K562 (cell line): ENCODE measurements at regions of chr1 and their contacts with region 1.

Region 1: GRCh38 chr1:206734499-206735142 is 36.0 kb upstream of the IL19 start:
- DNase-seq: peak; percentile 72 to 79 (median 76)
- ATAC-seq: peak; percentile 84
- H3K4me3 ChIP-seq: no peak overlapping the region
- H3K27ac ChIP-seq: no peak overlapping the region
- H3K4me1 ChIP-seq: peaks cover 10 to 17% of the 10 kb centered on the region in 2 experiments
- H3K27me3 ChIP-seq: no peaks in the 10 kb centered on the region; a peak in 1 of 5 replicates
- CTCF ChIP-seq: peak; percentile 89 to 96 (median 89)
- EP300 ChIP-seq: no peak
- POLR2A ChIP-seq: no peak
- RAD21 ChIP-seq: peak; percentile 88 to 89

Region 2: GRCh38 chr1:206489980-206490770 is 244.4 kb before region 1 on chr1:
- CTCF ChIA-PET with region 1: no interaction called
- POLR2A ChIA-PET with region 1: no interaction called
- in situ Hi-C with region 1: no loop called
- intact Hi-C with region 1: loop called (anchors 10 kb)
- DNase-seq: peak; percentile 90 to 94 (median 92)
- ATAC-seq: peak; percentile 96
- H3K4me3 ChIP-seq: no peak overlapping the region
- H3K27ac ChIP-seq: no peak overlapping the region
- H3K4me1 ChIP-seq: peaks cover 19 to 31% of the 10 kb centered on the region in 2 experiments
- H3K27me3 ChIP-seq: no peaks in the 10 kb centered on the region
- CTCF ChIP-seq: peak; percentile 99
- EP300 ChIP-seq: no peak
- POLR2A ChIP-seq: no peak
- RAD21 ChIP-seq: peak; percentile 98 to 99

Region 3: DNA sequence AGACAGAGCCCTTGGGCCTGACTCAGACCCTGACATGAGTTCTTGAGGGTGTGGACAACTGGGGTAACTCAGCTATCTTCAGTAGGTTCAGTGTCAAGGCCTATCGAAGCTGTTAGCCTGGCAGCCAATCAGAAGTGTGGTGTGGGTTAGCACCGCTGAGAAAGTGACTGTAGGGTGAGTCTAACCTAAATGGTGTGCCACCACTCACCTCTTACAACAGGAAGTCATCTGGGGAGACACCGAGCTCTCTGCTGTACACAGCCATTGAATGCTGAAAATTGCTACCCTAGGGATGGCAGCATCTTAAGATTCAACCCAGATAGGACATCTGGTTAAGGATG is 182.7 kb before region 1 on chr1:
- CTCF ChIA-PET with region 1: no interaction called
- POLR2A ChIA-PET with region 1: no interaction called
- in situ Hi-C with region 1: no loop called
- intact Hi-C with region 1: no loop called
- DNase-seq: peak in 1 of 4 experiments; percentile 40
- ATAC-seq: no peak
- H3K4me3 ChIP-seq: no peak overlapping the region
- H3K27ac ChIP-seq: no peak overlapping the region
- H3K4me1 ChIP-seq: peaks cover 27 to 61% of the 10 kb centered on the region in 2 experiments
- H3K27me3 ChIP-seq: no peaks in the 10 kb centered on the region
- CTCF ChIP-seq: no peak
- EP300 ChIP-seq: no peak
- POLR2A ChIP-seq: no peak
- RAD21 ChIP-seq: no peak

Region 4: DNA sequence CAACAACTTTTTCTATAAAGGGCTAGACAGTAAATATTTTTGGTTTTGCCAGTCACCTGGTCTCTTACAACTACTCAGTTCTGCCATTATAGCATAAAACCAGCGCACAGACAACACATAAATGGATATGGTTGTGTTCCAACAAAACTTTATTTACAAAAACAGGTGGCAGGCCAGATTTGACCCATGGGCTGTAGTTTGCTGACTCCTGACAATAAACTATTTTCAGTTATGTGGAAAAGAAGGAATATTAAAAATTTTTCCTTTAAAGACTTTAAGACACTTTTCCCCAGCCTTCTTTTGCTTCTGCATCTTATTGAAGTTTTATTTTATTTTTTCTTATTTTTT is 138.3 kb before region 1 on chr1:
- CTCF ChIA-PET with region 1: no interaction called
- POLR2A ChIA-PET with region 1: no interaction called
- in situ Hi-C with region 1: no loop called
- intact Hi-C with region 1: no loop called
- DNase-seq: no peak
- ATAC-seq: no peak
- H3K4me3 ChIP-seq: no peak overlapping the region
- H3K27ac ChIP-seq: no peak overlapping the region
- H3K4me1 ChIP-seq: peaks cover 0 to under 1% of the 10 kb centered on the region in 2 experiments; a peak in 2 of 5 replicates
- H3K27me3 ChIP-seq: no peaks in the 10 kb centered on the region
- CTCF ChIP-seq: no peak
- EP300 ChIP-seq: no peak
- POLR2A ChIP-seq: no peak
- RAD21 ChIP-seq: no peak

Region 5: DNA sequence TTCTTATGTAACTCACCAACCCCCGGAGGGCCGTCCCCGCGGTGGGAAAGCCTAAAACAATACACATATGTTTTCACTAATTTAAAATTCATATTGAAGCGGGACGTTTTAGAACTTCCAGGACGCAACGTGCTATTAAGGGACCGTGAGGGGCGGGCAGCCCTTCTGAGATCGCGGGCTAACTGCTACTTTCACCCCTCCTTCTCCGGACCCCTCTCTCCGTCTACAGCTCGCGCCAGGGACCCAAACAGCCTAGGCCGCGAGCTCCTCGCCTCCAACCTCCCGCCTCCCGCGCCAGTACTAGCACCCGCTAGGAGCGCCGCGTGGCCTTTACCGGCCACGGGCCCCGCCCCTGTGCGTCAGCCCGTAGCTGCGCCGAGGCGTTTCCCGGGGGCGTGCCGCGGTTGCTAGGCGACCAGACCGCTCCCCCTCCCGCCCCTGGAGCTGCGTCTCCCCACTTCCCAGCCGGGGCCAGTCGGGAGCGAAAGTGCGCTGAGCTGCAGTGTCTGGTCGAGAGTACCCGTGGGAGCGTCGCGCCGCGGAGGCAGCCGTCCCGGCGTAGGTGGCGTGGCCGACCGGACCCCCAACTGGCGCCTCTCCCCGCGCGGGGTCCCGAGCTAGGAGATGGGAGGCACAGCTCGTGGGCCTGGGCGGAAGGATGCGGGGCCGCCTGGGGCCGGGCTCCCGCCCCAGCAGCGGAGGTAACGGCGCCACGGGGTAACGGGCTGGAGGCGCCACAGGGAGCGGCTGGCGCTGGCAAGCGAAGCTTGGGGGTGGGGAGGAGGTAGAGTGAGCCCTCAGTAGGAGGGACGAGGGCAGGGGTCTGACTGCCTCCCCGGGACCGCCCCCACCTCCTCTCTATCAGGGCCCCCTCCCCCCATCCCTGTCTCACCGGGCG is 99.3 kb before region 1 on chr1 and contains the start of gene DYRK3:
- CTCF ChIA-PET with region 1: interaction called, 3 read pairs
- POLR2A ChIA-PET with region 1: interaction called, 3 read pairs
- in situ Hi-C with region 1: no loop called
- intact Hi-C with region 1: loop called (anchors 2 kb)
- DNase-seq: peak; percentile 98 to 99 (median 99)
- ATAC-seq: peak; percentile 93
- H3K4me3 ChIP-seq: peak within 1 kb of the TSS; percentile 87
- H3K27ac ChIP-seq: peak within 1 kb of the TSS; percentile 77
- H3K4me1 ChIP-seq: peaks cover 14 to 24% of the 10 kb centered on the region in 2 experiments
- H3K27me3 ChIP-seq: no peaks in the 10 kb centered on the region
- CTCF ChIP-seq: peak in 2 of 3 experiments; percentile 30; a peak in 2 of 6 replicates
- EP300 ChIP-seq: no peak; the same call in 1 of the 2 replicates
- POLR2A ChIP-seq: peak; percentile 90
- RAD21 ChIP-seq: no peak; a peak in 1 of 4 replicates
- polyA plus RNA-seq, gene DYRK3: 4.5 to 5.2 TPM

Region 6: DNA sequence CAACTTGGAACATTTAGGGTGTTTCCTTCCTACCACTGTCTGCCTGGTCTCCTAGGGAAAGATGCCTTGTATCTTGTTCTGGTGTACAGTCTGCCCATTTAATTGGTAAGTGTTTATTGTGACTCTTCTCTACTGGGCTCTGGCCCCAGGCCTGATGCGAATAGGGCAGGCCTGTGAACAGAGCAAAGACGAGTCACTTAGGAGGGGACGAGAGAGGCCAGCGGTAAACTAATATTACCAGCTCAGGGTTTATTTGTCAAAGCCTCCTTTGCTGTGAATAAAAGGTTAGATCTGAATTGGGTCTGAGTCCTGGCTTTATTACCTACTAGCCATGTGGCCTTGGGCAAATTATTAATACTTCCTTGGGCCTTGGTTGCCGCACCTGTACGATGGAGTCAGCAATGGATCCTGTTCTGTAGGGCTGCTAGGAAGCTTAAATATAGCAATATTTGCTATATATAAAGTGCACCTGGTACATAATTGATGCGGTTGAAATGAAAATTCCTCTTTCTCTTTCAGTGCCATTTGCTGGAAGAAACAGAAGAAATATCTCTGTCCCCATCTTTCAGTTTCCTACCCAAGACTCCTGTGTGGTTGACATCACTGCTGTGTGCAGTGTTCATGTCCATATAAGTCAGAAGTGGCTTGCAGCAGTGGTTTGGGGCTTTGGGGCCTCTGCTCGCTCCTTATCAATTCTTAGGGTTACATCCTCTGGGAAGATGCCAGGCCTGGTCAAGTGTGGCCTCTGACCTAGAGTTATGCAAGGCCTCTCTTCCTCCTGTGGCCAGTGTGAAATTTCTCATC is 17.5 kb before region 1 on chr1:
- CTCF ChIA-PET with region 1: interaction called, 3 read pairs
- POLR2A ChIA-PET with region 1: interaction called, 10 read pairs
- in situ Hi-C with region 1: no loop called
- intact Hi-C with region 1: no loop called
- DNase-seq: peak in 2 of 4 experiments; percentile 72 to 92
- ATAC-seq: peak; percentile 75
- H3K4me3 ChIP-seq: no peak overlapping the region
- H3K27ac ChIP-seq: peak overlapping the region; percentile 57
- H3K4me1 ChIP-seq: peaks cover 38 to 66% of the 10 kb centered on the region in 2 experiments
- H3K27me3 ChIP-seq: no peaks in the 10 kb centered on the region
- CTCF ChIP-seq: no peak
- EP300 ChIP-seq: peak; percentile 83
- POLR2A ChIP-seq: no peak
- RAD21 ChIP-seq: peak in 1 of 2 experiments; percentile 40; a peak in 2 of 4 replicates

Region 7: DNA sequence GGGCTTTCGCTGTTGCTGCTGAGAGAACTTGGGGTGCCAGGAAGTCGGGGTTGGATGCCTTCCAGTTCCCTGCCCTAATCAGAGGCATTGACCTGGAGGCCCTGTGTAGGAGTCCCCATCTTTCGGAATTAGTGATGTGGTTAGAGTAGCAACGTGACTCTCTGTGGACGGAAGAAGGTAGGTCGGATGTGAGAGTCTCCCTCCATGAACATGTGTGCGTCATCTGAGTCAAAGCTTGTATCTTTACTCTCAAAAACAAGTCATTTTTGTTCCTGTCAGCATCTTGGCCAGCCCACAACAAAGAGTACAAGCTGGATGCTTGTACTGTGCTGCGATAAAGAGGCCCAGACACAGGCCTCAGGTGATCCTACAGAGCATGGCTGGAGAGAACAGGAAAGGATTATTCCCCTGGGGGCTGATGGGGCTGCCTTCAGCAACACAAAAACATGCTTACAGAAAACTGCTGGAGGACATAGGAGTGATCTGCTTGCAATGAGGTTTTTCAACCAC is 68.7 kb after region 1 on chr1:
- CTCF ChIA-PET with region 1: interaction called, 7 read pairs
- POLR2A ChIA-PET with region 1: no interaction called
- in situ Hi-C with region 1: loop called (anchors 5 kb)
- intact Hi-C with region 1: loop called (anchors 1 kb)
- DNase-seq: no peak
- ATAC-seq: no peak; the same call in 2 of the 3 replicates
- H3K4me3 ChIP-seq: no peak overlapping the region
- H3K27ac ChIP-seq: no peak overlapping the region
- H3K4me1 ChIP-seq: no peaks in the 10 kb centered on the region; a peak in 1 of 5 replicates
- H3K27me3 ChIP-seq: peaks cover 13 to 29% of the 10 kb centered on the region in 2 experiments
- CTCF ChIP-seq: no peak
- EP300 ChIP-seq: no peak
- POLR2A ChIP-seq: no peak
- RAD21 ChIP-seq: no peak

Region 8: DNA sequence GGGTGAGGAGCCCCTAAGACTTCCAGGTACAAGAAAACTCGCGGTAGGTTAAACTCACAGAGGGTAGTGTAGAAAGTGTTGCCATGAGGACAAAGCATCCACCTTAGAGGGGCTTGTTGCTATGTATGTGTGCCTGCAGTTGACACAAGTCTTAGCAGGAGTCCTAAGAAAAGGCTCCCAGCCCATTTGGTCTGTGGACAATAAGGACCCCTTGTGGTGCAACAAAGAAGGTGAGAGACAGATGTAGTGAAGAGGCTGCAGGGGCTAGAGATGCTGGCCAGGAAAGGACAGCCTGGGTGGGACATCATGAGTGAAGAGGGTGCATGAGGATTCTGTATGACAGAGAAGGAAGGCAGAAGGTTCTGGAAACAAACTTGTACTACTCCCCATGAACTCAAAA is 74.0 kb after region 1 on chr1:
- CTCF ChIA-PET with region 1: interaction called, 7 read pairs
- POLR2A ChIA-PET with region 1: no interaction called
- in situ Hi-C with region 1: loop called (anchors 5 kb)
- intact Hi-C with region 1: loop called (anchors 1 kb)
- DNase-seq: peak; percentile 30 to 71 (median 48)
- ATAC-seq: peak; percentile 97
- H3K4me3 ChIP-seq: no peak overlapping the region
- H3K27ac ChIP-seq: no peak overlapping the region
- H3K4me1 ChIP-seq: no peaks in the 10 kb centered on the region
- H3K27me3 ChIP-seq: peaks cover 5 to 13% of the 10 kb centered on the region in 2 experiments; a peak in 3 of 5 replicates
- CTCF ChIP-seq: peak; percentile 75 to 81 (median 77)
- EP300 ChIP-seq: no peak
- POLR2A ChIP-seq: no peak
- RAD21 ChIP-seq: peak; percentile 92 to 95

Region 9: DNA sequence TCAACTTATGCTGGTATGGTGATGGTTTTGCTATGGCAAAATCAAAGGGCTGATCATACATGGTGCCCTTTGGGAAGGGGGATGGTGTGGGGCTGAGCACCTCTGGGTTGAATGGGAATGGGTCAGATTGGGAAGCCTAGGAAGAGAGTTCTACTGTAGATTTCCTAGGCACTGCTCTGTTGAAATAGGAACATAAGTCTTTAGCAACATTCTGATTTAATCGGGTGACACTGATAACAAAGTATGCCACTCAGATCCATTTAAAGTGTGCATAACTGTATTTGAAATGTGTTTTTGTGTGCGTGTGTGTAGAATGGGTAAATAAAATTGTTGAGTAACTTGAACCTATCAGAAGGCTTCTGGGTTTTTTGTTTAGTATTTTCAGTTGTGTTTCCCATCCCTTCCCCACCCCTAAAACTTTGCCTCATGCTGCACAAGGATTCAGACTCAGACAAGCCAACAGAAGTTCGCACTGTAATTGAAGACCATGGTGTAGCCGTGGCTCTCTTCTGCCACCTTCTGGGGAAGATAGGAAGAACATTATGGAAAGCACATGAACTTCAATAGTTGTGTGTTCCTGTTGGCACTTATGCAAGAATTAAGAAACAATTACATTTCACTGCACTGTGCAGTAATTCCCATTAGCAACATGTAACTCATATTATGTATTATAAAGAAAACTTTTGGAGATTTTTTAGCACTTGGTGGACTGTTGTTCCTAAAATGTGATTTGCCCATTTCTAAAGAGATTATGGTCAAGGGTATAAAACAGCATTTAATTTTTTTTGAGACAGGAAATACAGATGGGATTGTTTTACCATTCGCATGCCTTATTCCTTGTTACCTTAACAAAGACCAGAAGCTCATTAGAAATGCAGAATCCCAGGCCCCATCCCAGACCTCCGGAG is 343.1 kb after region 1 on chr1:
- CTCF ChIA-PET with region 1: no interaction called
- POLR2A ChIA-PET with region 1: no interaction called
- in situ Hi-C with region 1: no loop called
- intact Hi-C with region 1: loop called (anchors 5 kb)
- DNase-seq: peak; percentile 79 to 91 (median 82)
- ATAC-seq: peak; percentile 96
- H3K4me3 ChIP-seq: no peak overlapping the region
- H3K27ac ChIP-seq: no peak overlapping the region
- H3K4me1 ChIP-seq: peaks cover 0 to 10% of the 10 kb centered on the region in 2 experiments; a peak in 2 of 5 replicates
- H3K27me3 ChIP-seq: no peaks in the 10 kb centered on the region
- CTCF ChIP-seq: peak; percentile 92 to 98 (median 95)
- EP300 ChIP-seq: no peak
- POLR2A ChIP-seq: no peak
- RAD21 ChIP-seq: peak; percentile 97 to 98